ENCODE measurements at regions of chr1 and their contacts with region 1.

Region 1: GRCh38 chr1:11000526-11000925 is 11.9 kb upstream of the TARDBP start:
- DNase-seq: no peak
- H3K4me3 ChIP-seq: no peak overlapping the region
- H3K27ac ChIP-seq: no peak overlapping the region
- H3K4me1 ChIP-seq: no peaks in the 10 kb centered on the region
- H3K27me3 ChIP-seq: no peaks in the 10 kb centered on the region
- CTCF ChIP-seq: no peak
- EP300 ChIP-seq: no peak
- POLR2A ChIP-seq: no peak

Region 2: GRCh38 chr1:10304295-10304694 is 696.2 kb before region 1 on chr1:
- intact Hi-C with region 1: loop called in 1 of 4 experiments (anchors 5 kb)
- DNase-seq: no peak
- H3K4me3 ChIP-seq: no peak overlapping the region
- H3K27ac ChIP-seq: no peak overlapping the region
- H3K4me1 ChIP-seq: no peaks in the 10 kb centered on the region
- H3K27me3 ChIP-seq: no peaks in the 10 kb centered on the region
- CTCF ChIP-seq: no peak
- EP300 ChIP-seq: no peak
- POLR2A ChIP-seq: no peak

Region 3: DNA sequence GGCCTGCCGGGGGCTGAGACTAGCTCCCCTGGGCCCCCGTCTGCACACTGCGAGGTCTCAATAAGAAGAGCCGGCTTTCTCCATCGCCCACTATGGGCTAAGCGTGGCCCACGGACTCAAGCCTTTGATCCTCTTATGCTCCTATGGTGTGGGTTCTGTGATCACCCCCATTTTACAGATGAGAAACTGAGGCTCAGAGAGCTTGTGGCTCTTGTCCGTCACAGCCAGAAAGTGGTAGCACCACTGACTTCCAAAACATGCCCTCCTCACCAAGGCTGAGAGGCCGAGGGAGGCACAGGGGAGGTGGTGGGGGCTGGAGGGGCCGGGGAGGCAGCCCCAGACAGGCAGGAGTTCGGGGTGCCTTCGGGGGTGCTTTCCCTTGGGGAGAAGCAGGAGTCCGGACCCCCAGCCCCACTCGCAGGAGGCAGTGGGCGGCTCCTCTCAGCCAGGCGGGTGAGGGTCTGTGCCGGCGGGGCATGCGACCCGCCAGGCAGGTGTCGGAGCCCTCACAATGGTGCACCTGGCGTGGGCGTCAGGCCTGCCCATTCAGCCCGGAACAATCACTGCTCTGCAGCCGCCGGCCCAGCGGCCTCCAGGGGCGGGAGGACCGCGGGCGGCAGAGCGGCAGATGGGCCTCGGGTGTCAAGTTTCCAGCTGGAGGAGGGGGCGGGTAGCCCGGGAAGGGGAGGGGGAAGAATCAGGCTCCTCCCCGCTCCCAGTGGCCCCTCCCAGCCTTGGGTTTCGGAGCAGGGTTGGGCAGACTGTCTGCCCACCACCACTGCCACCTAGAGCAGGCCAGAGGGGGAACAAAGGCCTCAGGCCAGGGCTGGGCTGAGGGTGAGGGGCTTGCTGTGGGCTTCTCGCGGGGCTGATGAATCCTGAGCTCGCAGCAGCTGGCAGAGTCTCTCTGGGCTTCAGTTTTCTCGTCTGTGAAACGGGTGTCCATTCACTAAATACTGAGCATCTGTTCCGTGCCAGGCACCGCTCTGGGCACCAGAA is 164.8 kb before region 1 on chr1:
- intact Hi-C with region 1: no loop called
- DNase-seq: peak in 2 of 5 donors; percentile 47 to 52
- H3K4me3 ChIP-seq: no peak overlapping the region
- H3K27ac ChIP-seq: no peak overlapping the region
- H3K4me1 ChIP-seq: no peaks in the 10 kb centered on the region
- H3K27me3 ChIP-seq: no peaks in the 10 kb centered on the region
- CTCF ChIP-seq: no peak
- EP300 ChIP-seq: no peak
- POLR2A ChIP-seq: no peak

Region 4: GRCh38 chr1:11037740-11038182 is 37.2 kb after region 1 on chr1:
- intact Hi-C with region 1: no loop called
- DNase-seq: peak; percentile 81 to 91 (median 88)
- H3K4me3 ChIP-seq: no peak overlapping the region
- H3K27ac ChIP-seq: no peak overlapping the region
- H3K4me1 ChIP-seq: no peaks in the 10 kb centered on the region
- H3K27me3 ChIP-seq: no peaks in the 10 kb centered on the region
- CTCF ChIP-seq: peak; percentile 87 to 94 (median 89)
- EP300 ChIP-seq: no peak
- POLR2A ChIP-seq: no peak

Region 5: GRCh38 chr1:11671544-11672286 is 671.2 kb after region 1 on chr1:
- intact Hi-C with region 1: no loop called
- DNase-seq: no peak
- H3K4me3 ChIP-seq: no peak overlapping the region
- H3K27ac ChIP-seq: no peak overlapping the region
- H3K4me1 ChIP-seq: no peaks in the 10 kb centered on the region
- H3K27me3 ChIP-seq: no peaks in the 10 kb centered on the region
- CTCF ChIP-seq: no peak
- EP300 ChIP-seq: no peak
- POLR2A ChIP-seq: no peak